Common myeloid progenitor, CD34-positive (primary cell): ENCODE measurements at regions of chr15 and their contacts with region 1.

Region 1: DNA sequence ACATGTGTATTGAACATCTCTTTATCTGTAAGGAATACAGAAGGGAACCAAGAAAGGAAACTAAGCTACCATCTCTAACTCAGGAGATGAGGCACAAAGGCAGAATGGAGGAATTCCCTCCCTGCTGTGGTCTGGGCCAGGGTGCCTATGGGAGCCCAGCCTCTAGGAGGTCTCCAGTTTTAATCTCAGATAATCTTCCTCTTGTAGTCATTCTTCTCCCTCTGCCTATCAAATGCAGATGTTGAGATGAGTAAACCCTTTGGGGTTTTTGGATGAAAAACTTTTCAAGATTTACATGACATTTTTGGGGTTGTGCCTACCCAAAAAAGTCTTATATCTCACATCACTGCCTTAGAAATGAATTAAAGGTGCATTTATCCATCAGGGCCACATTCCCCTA is 23.3 kb downstream of the SCG5 start:
- DNase-seq: no peak
- H3K4me3 ChIP-seq: no peak overlapping the region
- H3K27ac ChIP-seq: no peak overlapping the region
- H3K4me1 ChIP-seq: no peaks in the 10 kb centered on the region
- H3K27me3 ChIP-seq: no peaks in the 10 kb centered on the region

Region 2: DNA sequence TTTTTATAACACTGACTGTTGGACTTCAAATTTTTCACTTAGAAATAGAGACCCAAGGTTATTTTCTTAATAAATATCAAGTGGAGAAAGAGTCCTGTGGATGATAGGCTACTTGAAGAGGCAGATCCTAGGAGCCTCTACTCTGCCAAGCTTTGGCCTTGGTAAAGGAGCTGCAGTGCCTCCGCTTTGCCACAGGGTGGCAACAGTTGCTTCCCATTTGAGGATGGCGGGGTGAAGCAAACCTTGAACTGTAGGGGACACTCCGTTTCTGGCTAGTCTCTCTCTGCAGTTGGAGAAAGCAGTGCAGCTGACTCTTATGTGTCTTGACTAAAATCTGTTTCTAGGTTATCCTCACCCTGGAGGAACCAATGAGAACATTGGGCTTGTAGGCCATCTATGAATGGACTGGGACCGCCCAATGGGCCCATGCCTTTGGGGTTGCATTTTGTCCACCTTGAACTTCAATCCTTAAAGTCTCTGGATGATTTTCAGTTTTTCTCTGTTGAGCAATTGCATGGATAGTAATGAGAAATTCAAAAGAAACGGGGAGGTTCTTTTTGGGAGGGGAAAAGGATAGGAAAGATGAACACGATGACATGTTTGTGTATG is 13.5 kb before region 1 on chr15:
- CTCF ChIA-PET with region 1: interaction called, 31 read pairs
- POLR2A ChIA-PET with region 1: no interaction called
- DNase-seq: peak; percentile 52 to 78 (median 72)
- H3K4me3 ChIP-seq: no peak overlapping the region
- H3K27ac ChIP-seq: no peak overlapping the region
- H3K4me1 ChIP-seq: peaks cover 3 to 11% (median 7%) of the 10 kb centered on the region in 4 experiments
- H3K27me3 ChIP-seq: no peaks in the 10 kb centered on the region

Region 3: DNA sequence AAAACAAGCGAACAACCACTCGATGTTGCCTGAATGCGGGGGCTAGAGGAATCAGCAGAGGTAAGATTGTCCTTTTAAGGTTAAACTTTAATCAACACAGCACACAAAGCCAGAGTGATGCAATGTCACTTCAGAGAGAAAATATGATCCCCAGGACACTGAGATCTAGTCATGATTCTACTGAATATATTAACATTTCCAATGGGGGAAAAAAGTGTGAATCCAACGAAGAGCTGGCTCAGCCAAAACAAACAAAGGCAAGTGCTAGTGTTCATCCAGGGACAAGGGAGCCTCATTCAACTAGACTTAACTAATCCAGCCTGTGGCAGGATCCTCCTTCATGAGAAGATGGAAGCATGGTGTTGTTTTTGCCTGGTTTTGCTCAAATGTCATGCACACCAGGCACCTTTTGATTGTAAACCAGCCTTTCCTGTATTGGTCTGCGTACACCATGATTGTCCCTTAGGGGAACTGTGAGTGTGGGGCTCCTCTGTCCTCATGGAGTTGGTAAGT is 12.5 kb after region 1 on chr15:
- CTCF ChIA-PET with region 1: interaction called, 15 read pairs
- POLR2A ChIA-PET with region 1: no interaction called
- DNase-seq: no peak
- H3K4me3 ChIP-seq: no peak overlapping the region
- H3K27ac ChIP-seq: no peak overlapping the region
- H3K4me1 ChIP-seq: no peaks in the 10 kb centered on the region
- H3K27me3 ChIP-seq: peaks cover 0 to 2% (median 0%) of the 10 kb centered on the region in 5 experiments

Region 4: GRCh38 chr15:32698773-32699390 is 34.1 kb after region 1 on chr15:
- CTCF ChIA-PET with region 1: no interaction called
- POLR2A ChIA-PET with region 1: no interaction called
- DNase-seq: no peak
- H3K4me3 ChIP-seq: no peak overlapping the region
- H3K27ac ChIP-seq: no peak overlapping the region
- H3K4me1 ChIP-seq: no peaks in the 10 kb centered on the region
- H3K27me3 ChIP-seq: peaks cover 0 to 11% (median under 1%) of the 10 kb centered on the region in 5 experiments

Region 5: DNA sequence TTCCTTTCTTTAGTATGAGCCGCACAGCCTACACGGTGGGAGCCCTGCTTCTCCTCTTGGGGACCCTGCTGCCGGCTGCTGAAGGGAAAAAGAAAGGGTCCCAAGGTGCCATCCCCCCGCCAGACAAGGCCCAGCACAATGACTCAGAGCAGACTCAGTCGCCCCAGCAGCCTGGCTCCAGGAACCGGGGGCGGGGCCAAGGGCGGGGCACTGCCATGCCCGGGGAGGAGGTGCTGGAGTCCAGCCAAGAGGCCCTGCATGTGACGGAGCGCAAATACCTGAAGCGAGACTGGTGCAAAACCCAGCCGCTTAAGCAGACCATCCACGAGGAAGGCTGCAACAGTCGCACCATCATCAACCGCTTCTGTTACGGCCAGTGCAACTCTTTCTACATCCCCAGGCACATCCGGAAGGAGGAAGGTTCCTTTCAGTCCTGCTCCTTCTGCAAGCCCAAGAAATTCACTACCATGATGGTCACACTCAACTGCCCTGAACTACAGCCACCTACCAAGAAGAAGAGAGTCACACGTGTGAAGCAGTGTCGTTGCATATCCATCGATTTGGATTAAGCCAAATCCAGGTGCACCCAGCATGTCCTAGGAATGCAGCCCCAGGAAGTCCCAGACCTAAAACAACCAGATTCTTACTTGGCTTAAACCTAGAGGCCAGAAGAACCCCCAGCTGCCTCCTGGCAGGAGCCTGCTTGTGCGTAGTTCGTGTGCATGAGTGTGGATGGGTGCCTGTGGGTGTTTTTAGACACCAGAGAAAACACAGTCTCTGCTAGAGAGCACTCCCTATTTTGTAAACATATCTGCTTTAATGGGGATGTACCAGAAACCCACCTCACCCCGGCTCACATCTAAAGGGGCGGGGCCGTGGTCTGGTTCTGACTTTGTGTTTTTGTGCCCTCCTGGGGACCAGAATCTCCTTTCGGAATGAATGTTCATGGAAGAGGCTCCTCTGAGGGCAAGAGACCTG is 66.2 kb after region 1 on chr15:
- CTCF ChIA-PET with region 1: no interaction called
- POLR2A ChIA-PET with region 1: no interaction called
- DNase-seq: peak; percentile 10 to 52 (median 46)
- H3K4me3 ChIP-seq: peak overlapping the region in 1 of 7 experiments; percentile 2
- H3K27ac ChIP-seq: no peak overlapping the region
- H3K4me1 ChIP-seq: peaks cover 0 to 8% (median 0%) of the 10 kb centered on the region in 4 experiments
- H3K27me3 ChIP-seq: peaks cover 0 to 8% (median 3%) of the 10 kb centered on the region in 5 experiments

Region 6: GRCh38 chr15:32774022-32774421 is 109.2 kb after region 1 on chr15:
- CTCF ChIA-PET with region 1: no interaction called
- POLR2A ChIA-PET with region 1: no interaction called
- DNase-seq: no peak
- H3K4me3 ChIP-seq: no peak overlapping the region
- H3K27ac ChIP-seq: no peak overlapping the region
- H3K4me1 ChIP-seq: no peaks in the 10 kb centered on the region
- H3K27me3 ChIP-seq: no peaks in the 10 kb centered on the region

Region 7: DNA sequence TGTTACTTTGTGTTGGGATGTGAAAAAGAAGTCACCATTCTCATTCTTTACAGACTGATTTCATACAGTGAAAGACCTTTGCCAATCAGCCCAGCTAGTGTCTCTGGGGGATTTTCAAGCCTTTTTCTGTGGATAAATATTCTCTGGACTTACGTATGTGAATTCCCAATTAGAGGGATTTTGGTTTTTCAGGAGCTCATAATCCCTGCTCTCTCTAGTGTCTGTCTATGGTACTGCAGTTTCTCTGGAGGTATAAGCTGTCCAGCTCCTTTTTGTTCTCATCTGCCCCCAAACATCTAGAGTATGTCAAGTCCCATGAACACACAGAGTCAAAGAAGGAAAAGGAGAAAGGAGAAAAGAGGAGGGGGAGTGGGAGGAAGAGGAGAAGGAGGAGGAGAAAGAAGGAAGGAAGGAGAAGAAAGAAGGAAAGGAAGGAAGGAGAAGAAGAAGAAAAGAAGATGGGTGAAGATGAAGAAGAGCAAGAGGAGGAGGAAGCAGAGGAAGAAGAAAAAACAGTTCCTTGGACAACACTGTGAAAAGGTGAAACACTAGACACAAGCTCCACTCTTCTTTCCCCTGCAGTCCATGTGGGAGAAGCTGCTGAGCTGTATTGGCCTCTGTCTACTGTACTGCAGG is 271.6 kb after region 1 on chr15:
- CTCF ChIA-PET with region 1: interaction called, 19 read pairs
- POLR2A ChIA-PET with region 1: no interaction called
- DNase-seq: peak; percentile 14 to 22 (median 14)
- H3K4me3 ChIP-seq: no peak overlapping the region
- H3K27ac ChIP-seq: no peak overlapping the region
- H3K4me1 ChIP-seq: no peaks in the 10 kb centered on the region
- H3K27me3 ChIP-seq: peaks cover 0 to 4% (median 2%) of the 10 kb centered on the region in 5 experiments

Region 8: DNA sequence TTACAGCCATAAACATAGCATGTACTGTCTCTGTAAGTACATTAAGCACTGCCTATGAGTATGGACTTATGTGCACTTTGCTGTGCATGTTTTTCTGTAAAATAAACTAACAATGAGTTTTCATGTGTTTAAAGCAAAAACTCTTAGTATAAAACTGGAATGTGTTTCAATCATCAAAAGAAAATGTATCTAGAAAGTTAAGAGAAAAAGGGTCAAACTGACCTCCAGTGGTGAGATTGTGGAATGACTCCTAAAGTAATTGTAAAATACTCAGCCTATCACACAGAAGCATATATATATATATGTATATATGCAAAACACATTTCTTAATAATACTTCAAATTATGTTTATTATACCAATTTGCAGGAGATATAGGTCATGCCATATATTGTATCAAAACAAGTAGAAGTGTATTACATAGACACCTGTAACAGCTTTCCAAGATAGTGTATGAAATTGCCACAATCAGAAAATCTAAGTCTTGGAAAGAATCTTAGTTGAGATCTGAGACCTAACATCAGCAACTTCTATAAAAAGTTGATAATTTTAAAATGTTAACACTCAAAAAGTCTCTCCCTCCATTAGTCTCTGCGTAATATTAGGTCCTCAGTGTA is 330.1 kb after region 1 on chr15:
- CTCF ChIA-PET with region 1: interaction called, 53 read pairs
- POLR2A ChIA-PET with region 1: no interaction called
- DNase-seq: peak; percentile 29 to 65 (median 58)
- H3K4me3 ChIP-seq: no peak overlapping the region
- H3K27ac ChIP-seq: no peak overlapping the region
- H3K4me1 ChIP-seq: no peaks in the 10 kb centered on the region
- H3K27me3 ChIP-seq: peaks cover 0 to 4% (median 0%) of the 10 kb centered on the region in 5 experiments